ENCODE measurements at regions of chr4 and their contacts with region 1.

Region 1: GRCh38 chr4:89226665-89227574 is 80.7 kb downstream of the GPRIN3 start:
- DNase-seq: peak; percentile 40 to 86
- ATAC-seq: peak; percentile 99 to 100
- H3K4me3 ChIP-seq: no peak overlapping the region
- H3K27ac ChIP-seq: peak overlapping the region; percentile 51 to 60; a peak in 4 of 6 replicates
- H3K4me1 ChIP-seq: peaks cover 4% of the 10 kb centered on the region; the same call in 1 of the 3 replicates
- CTCF ChIP-seq: peak; percentile 77
- EP300 ChIP-seq: no peak
- POLR2A ChIP-seq: no peak
- RAD21 ChIP-seq: peak; percentile 91 to 92

Region 2: GRCh38 chr4:88659055-88659889 is 567.6 kb before region 1 on chr4:
- CTCF ChIA-PET with region 1: no interaction called
- POLR2A ChIA-PET with region 1: no interaction called
- DNase-seq: peak; percentile 64 to 67
- ATAC-seq: peak; percentile 98 to 100
- H3K4me3 ChIP-seq: no peak overlapping the region
- H3K27ac ChIP-seq: peak overlapping the region; percentile 65 to 76; a peak in 5 of 6 replicates
- H3K4me1 ChIP-seq: peaks cover 35% of the 10 kb centered on the region
- CTCF ChIP-seq: peak; percentile 68
- EP300 ChIP-seq: no peak
- POLR2A ChIP-seq: no peak
- RAD21 ChIP-seq: peak; percentile 86 to 88

Region 3: GRCh38 chr4:88953400-88953799 is 273.5 kb before region 1 on chr4:
- CTCF ChIA-PET with region 1: no interaction called
- POLR2A ChIA-PET with region 1: no interaction called
- DNase-seq: no peak
- ATAC-seq: no peak
- H3K4me3 ChIP-seq: no peak overlapping the region
- H3K27ac ChIP-seq: no peak overlapping the region
- H3K4me1 ChIP-seq: no peaks in the 10 kb centered on the region
- CTCF ChIP-seq: no peak
- EP300 ChIP-seq: no peak
- POLR2A ChIP-seq: no peak
- RAD21 ChIP-seq: no peak

Region 4: GRCh38 chr4:89110986-89111832 is 115.7 kb before region 1 on chr4 and contains the start of gene TIGD2:
- CTCF ChIA-PET with region 1: no interaction called
- POLR2A ChIA-PET with region 1: no interaction called
- DNase-seq: peak; percentile 70 to 86
- ATAC-seq: peak; percentile 89 to 94
- H3K4me3 ChIP-seq: peak within 1 kb of the TSS; percentile 82
- H3K27ac ChIP-seq: peak within 1 kb of the TSS; percentile 95 to 99
- H3K4me1 ChIP-seq: peaks cover 7% of the 10 kb centered on the region; the same call in 2 of the 3 replicates
- CTCF ChIP-seq: peak; percentile 76
- EP300 ChIP-seq: no peak
- POLR2A ChIP-seq: peak; percentile 73
- RAD21 ChIP-seq: peak; percentile 33 to 66
- polyA plus RNA-seq, gene TIGD2: 8.8 and 10.7 TPM in 2 replicates

Region 5: GRCh38 chr4:89216866-89217265 is 10.1 kb before region 1 on chr4:
- CTCF ChIA-PET with region 1: interaction called, 11 read pairs
- POLR2A ChIA-PET with region 1: no interaction called
- DNase-seq: no peak
- ATAC-seq: no peak
- H3K4me3 ChIP-seq: no peak overlapping the region
- H3K27ac ChIP-seq: no peak overlapping the region
- H3K4me1 ChIP-seq: peaks cover 7% of the 10 kb centered on the region; the same call in 1 of the 3 replicates
- CTCF ChIP-seq: no peak
- EP300 ChIP-seq: no peak
- POLR2A ChIP-seq: no peak
- RAD21 ChIP-seq: no peak

Region 6: GRCh38 chr4:89248879-89249281 is 22.0 kb after region 1 on chr4:
- CTCF ChIA-PET with region 1: interaction called, 13 read pairs
- POLR2A ChIA-PET with region 1: no interaction called
- DNase-seq: no peak
- ATAC-seq: no peak
- H3K4me3 ChIP-seq: no peak overlapping the region
- H3K27ac ChIP-seq: no peak overlapping the region
- H3K4me1 ChIP-seq: peaks cover 53% of the 10 kb centered on the region
- CTCF ChIP-seq: no peak
- EP300 ChIP-seq: no peak
- POLR2A ChIP-seq: no peak
- RAD21 ChIP-seq: no peak

Region 7: GRCh38 chr4:89279385-89279784 is 52.5 kb after region 1 on chr4:
- CTCF ChIA-PET with region 1: no interaction called
- POLR2A ChIA-PET with region 1: no interaction called
- DNase-seq: no peak
- ATAC-seq: no peak
- H3K4me3 ChIP-seq: no peak overlapping the region
- H3K27ac ChIP-seq: peak overlapping the region; percentile 49 to 79
- H3K4me1 ChIP-seq: peaks cover 61% of the 10 kb centered on the region
- CTCF ChIP-seq: no peak
- EP300 ChIP-seq: no peak
- POLR2A ChIP-seq: no peak
- RAD21 ChIP-seq: no peak

Region 8: DNA sequence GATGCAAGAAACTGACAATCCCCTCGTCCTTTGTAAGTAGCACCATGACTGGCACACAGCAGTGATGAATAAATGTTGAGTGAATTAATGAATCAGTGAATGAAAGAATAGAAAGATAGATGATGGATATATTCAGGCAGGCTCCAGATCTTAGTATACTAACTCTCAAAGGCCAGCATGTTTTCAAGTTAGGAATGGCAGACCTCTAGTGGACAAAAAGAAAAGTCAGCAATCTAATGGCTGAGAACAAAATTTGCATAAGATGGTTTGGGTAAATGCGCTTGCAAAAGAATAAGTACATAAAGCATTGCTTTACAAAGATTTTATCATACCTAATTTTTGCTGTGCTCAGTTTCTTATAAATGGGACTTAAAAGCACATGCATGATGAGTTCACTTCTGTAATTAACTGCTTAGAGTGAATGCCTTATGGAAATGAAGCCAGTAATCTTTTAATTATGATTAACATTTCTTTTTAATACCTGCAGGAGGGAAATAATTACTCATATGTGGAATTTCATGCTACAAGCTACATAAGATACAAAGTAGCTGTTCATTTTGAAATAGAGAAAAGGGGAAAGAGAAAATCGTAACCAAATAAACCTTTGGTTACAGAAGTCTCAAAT is 207.6 kb after region 1 on chr4:
- CTCF ChIA-PET with region 1: interaction called, 27 read pairs
- POLR2A ChIA-PET with region 1: no interaction called
- DNase-seq: peak; percentile 6 to 53
- ATAC-seq: peak; percentile 76 to 87; a peak in 5 of 6 replicates
- H3K4me3 ChIP-seq: no peak overlapping the region
- H3K27ac ChIP-seq: peak overlapping the region; percentile 25 to 60; a peak in 3 of 6 replicates
- H3K4me1 ChIP-seq: peaks cover 5% of the 10 kb centered on the region; the same call in 1 of the 3 replicates
- CTCF ChIP-seq: peak; percentile 73
- EP300 ChIP-seq: no peak
- POLR2A ChIP-seq: no peak
- RAD21 ChIP-seq: peak; percentile 82